ENCODE measurements at regions of chr5 and their contacts with region 1.

Region 1: DNA sequence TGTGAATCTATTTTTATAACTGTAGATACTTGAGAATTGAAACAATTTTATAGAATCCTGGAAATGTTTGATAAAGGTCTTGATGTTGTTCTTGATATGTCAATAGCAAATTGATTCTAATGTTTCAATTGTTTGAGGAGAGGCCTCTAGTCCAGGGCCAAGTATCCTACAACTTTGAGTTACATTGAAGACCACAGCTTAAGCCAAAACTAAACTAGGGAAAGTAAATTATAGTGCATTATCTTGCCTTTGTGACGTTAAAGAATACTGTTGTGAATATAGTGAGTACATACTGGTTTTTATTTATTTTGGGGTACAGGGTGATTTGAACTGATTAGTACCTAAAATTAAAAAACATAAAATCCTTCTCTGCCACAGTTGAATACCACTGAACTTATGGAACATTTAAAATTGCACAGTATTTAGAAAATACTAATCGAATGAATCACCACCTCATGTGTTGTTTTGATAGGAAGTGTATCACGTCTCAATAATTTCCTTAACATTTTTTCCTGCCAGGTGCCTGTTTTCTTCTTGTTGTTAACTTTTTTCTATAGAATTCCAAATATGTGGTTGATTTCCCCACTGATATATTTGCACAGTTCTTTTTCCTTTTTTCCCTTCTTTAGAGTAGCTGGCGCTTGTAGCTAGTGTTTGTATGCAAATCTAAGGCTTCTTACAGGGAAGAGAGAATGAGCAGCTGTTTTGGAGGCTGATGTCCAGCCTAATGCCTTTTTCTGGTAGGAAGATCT is 12.5 kb downstream of the ARHGEF28 start:
- DNase-seq: no peak
- H3K4me3 Mint-ChIP-seq: peak overlapping the region; percentile 48
- H3K27ac Mint-ChIP-seq: peak overlapping the region; percentile 85
- H3K4me1 Mint-ChIP-seq: peaks cover 76% of the 10 kb centered on the region
- H3K27me3 Mint-ChIP-seq: no peaks in the 10 kb centered on the region
- CTCF ChIP-seq: no peak

Region 2: DNA sequence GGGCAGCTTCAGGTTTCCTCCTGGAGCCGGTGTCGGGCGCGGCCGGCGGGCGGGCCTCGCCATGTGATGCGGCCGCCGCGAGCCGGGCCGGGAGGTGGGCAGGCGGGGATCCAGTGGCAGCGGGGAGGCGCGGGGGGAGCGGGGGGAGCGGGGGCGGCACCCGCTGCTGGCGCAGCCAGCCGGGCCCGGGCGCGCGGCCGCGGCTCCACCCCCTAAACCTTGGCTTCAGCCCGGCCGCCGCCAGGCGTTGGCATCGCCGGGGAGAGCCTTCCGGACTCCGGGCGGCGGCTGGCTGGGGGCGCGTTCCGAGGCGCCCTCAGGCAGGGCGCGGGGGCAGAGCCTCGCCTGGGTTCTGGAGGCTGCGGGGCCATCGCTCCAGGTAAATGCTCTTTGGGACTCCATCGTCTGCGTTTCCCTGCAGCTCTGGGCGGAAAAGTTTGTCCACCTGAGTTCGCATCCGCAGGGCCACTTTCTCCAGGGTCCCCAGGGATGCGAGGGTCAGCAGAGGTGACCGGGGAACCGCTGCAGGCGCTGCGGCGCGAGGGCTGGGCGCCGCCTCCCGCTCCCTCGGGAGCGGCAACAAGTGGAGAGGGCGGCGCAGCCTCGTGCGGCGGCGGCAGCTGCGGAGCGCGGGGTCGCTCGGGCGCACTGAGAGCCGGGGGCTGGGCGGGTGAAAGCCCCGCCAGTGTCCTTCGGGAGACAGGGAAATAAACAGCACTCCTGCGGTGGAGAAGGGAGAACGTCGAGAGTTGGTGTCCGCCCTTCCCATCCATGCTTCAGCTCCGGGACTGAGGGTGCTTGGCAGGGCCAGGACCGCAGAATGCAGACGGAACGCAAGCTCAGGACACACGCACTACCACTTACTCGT is 12.3 kb before region 1 on chr5 and contains the start of gene ARHGEF28:
- CTCF ChIA-PET with region 1: interaction called, 3 read pairs
- intact Hi-C with region 1: loop called (anchors 2 kb)
- DNase-seq: peak; percentile 90
- H3K4me3 Mint-ChIP-seq: peak within 1 kb of the TSS; percentile 85
- H3K27ac Mint-ChIP-seq: peak within 1 kb of the TSS; percentile 56
- H3K4me1 Mint-ChIP-seq: peaks cover 58% of the 10 kb centered on the region
- H3K27me3 Mint-ChIP-seq: no peaks in the 10 kb centered on the region
- CTCF ChIP-seq: no peak
- total RNA-seq, gene ARHGEF28: 79.3 and 92.0 TPM in 2 replicates

Region 3: GRCh38 chr5:73652377-73652776 is 13.9 kb after region 1 on chr5:
- CTCF ChIA-PET with region 1: interaction called, 12 read pairs
- intact Hi-C with region 1: no loop called
- DNase-seq: peak; percentile 64
- H3K4me3 Mint-ChIP-seq: peak overlapping the region; percentile 40
- H3K27ac Mint-ChIP-seq: peak overlapping the region; percentile 69
- H3K4me1 Mint-ChIP-seq: peaks cover 87% of the 10 kb centered on the region
- H3K27me3 Mint-ChIP-seq: no peaks in the 10 kb centered on the region
- CTCF ChIP-seq: no peak

Region 4: GRCh38 chr5:73674669-73675004 is 36.1 kb after region 1 on chr5:
- CTCF ChIA-PET with region 1: interaction called, 4 read pairs
- intact Hi-C with region 1: loop called (anchors 5 kb)
- DNase-seq: no peak
- H3K4me3 Mint-ChIP-seq: no peak overlapping the region
- H3K27ac Mint-ChIP-seq: peak overlapping the region; percentile 61
- H3K4me1 Mint-ChIP-seq: peaks cover 70% of the 10 kb centered on the region
- H3K27me3 Mint-ChIP-seq: no peaks in the 10 kb centered on the region
- CTCF ChIP-seq: no peak

Measured in Calu3 (cell line).